ENCODE measurements at regions of chrX and their contacts with region 1.

Region 1: DNA sequence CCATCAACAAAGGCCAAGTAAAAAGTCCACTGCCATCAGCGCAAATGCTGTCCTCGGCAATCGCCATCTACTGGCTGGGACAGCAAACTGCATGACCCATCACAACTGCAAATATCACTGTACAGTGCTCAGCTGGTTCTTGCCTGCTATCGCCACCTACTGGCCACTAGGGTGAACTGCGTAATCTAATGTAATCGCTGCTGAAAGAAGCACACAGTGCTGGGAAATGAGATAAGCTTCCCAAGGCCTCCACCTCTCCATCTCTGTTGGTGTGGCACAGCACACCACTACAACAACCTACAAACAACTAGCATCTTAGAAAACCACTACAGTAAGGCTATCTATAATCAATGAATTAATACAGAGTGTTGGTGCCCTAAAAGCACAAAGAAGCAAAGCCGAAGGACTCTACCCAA is 298.3 kb downstream of the TEX13A start:
- DNase-seq: peak; percentile 59
- CTCF ChIP-seq: peak; percentile 88

Region 2: DNA sequence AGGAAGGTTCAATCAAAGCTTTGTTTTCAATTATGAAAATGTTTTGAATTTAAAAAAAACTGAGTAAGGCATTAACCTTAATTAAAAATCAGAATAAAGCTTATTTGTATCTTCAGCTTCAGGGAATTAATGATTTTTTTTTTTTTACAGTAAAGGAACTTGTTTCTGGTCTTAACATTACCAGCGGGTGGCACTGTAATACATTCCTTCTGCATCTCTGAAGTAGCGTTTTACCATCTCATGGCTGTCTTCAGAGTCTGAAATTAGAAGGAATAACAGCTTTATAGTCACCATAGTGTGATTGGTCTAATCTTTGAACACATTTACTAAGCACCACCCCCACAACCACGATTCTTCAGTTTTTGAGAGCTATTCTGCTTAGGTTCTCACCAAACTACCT is 253.7 kb before region 1 on chrX:
- CTCF ChIA-PET with region 1: interaction called, 12 read pairs
- POLR2A ChIA-PET with region 1: no interaction called
- DNase-seq: no peak
- CTCF ChIP-seq: no peak

Region 3: GRCh38 chrX:104935581-104935980 is 13.4 kb after region 1 on chrX:
- CTCF ChIA-PET with region 1: interaction called, 19 read pairs
- POLR2A ChIA-PET with region 1: no interaction called
- DNase-seq: no peak
- CTCF ChIP-seq: no peak

Measured in GM10248 (cell line).